Natural killer cell (primary cell): ENCODE measurements at regions of chr2 and their contacts with region 1.

Region 1: DNA sequence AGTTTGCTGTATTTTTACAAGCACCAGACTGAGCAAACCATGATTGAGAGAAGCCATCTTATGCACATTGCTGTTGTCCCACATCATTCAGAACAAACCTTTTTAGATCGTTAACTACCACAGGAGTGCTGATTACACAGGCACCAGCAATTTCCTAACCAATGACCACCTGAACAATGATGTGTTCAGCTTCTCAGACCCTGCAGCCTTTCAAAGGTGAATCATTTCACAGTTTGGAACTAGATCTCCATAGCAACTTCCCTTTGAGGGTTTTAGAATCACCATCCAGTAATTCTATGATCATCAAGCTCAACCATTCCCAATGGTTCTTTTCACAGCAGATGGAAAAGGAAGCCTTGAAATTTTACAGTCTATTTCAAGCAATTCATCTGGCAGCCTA is 71.4 kb downstream of the OLA1 start:
- DNase-seq: no peak
- ATAC-seq: no peak
- H3K4me3 ChIP-seq: no peak overlapping the region
- H3K4me3 Mint-ChIP-seq: no peak overlapping the region
- H3K27ac ChIP-seq: no peak overlapping the region
- H3K27ac Mint-ChIP-seq: no peak overlapping the region
- H3K4me1 ChIP-seq: peaks cover 8% of the 10 kb centered on the region
- H3K4me1 Mint-ChIP-seq: peaks cover 26 to 33% of the 10 kb centered on the region in 2 donors
- H3K27me3 ChIP-seq: no peaks in the 10 kb centered on the region
- H3K27me3 Mint-ChIP-seq: no peaks in the 10 kb centered on the region
- CTCF ChIP-seq: no peak

Region 2: DNA sequence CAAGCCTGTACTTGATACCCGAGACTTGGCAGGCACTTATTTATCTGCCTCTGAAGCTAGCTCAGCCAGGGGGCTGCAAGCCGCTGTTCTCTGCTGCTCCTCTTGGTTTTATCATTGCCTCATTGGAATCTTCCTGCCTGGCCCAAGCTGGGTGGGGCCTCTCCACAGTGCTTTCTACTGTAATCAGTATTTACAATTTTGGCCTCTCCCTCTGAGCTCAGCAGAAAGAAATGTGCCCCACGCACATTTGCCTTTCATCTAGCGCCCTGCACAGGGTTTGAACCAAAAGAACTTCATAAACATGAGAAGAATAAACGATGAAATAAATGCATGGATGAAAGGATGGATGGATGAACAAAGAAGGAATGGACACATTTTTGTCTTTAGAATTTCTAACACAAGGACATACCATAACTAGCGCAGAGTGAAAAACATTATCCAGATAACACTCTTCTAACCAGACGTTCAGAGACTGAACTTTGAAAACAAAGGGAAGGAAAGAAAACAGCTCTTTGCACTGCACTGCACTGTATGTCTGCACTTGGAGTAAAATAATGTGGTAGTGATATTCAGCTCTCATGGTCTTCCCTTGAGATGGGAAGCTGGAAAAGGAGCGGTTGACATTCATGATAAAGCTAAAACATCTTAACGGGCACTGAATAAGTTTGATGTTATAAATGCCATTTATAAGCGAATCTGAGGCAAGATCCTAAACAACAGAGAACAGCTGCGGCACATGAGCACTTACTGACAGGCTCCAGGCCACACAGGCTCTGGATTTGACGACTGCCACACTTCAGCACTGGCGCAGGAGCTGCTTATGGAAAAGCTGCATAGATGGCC is 124.9 kb before region 1 on chr2:
- intact Hi-C with region 1: loop called (anchors 10 kb)
- DNase-seq: no peak
- ATAC-seq: no peak
- H3K4me3 ChIP-seq: no peak overlapping the region
- H3K4me3 Mint-ChIP-seq: no peak overlapping the region
- H3K27ac ChIP-seq: no peak overlapping the region
- H3K27ac Mint-ChIP-seq: no peak overlapping the region
- H3K4me1 ChIP-seq: no peaks in the 10 kb centered on the region
- H3K4me1 Mint-ChIP-seq: peaks cover 0 to 5% of the 10 kb centered on the region in 2 donors
- H3K27me3 ChIP-seq: no peaks in the 10 kb centered on the region
- H3K27me3 Mint-ChIP-seq: peaks cover 8 to 11% of the 10 kb centered on the region in 2 donors
- CTCF ChIP-seq: no peak

Region 3: GRCh38 chr2:174473796-174474195 is 296.9 kb after region 1 on chr2:
- intact Hi-C with region 1: no loop called
- DNase-seq: no peak
- ATAC-seq: no peak
- H3K4me3 ChIP-seq: no peak overlapping the region
- H3K4me3 Mint-ChIP-seq: no peak overlapping the region
- H3K27ac ChIP-seq: no peak overlapping the region
- H3K27ac Mint-ChIP-seq: no peak overlapping the region
- H3K4me1 ChIP-seq: no peaks in the 10 kb centered on the region
- H3K4me1 Mint-ChIP-seq: no peaks in the 10 kb centered on the region
- H3K27me3 ChIP-seq: no peaks in the 10 kb centered on the region
- H3K27me3 Mint-ChIP-seq: no peaks in the 10 kb centered on the region
- CTCF ChIP-seq: no peak